Tibial artery (tissue), 4 donors: ENCODE measurements at regions of chr3 and their contacts with region 1.

Region 1: GRCh38 chr3:112519424-112520001 is 20.2 kb upstream of the BTLA start:
- DNase-seq: no peak
- H3K4me3 ChIP-seq: no peak overlapping the region
- H3K27ac ChIP-seq: no peak overlapping the region
- H3K4me1 ChIP-seq: no peaks in the 10 kb centered on the region
- H3K27me3 ChIP-seq: no peaks in the 10 kb centered on the region
- CTCF ChIP-seq: peak; percentile 75 to 86

Region 2: GRCh38 chr3:112293368-112294321 is 225.9 kb before region 1 on chr3 and contains the start of gene SLC9C1:
- intact Hi-C with region 1: loop called (anchors 10 kb)
- DNase-seq: peak in 1 of 2 donors; percentile 27
- H3K4me3 ChIP-seq: peak within 1 kb of the TSS; percentile 45 to 53
- H3K27ac ChIP-seq: peak within 1 kb of the TSS; percentile 65 to 75
- H3K4me1 ChIP-seq: no peaks in the 10 kb centered on the region
- H3K27me3 ChIP-seq: no peaks in the 10 kb centered on the region
- CTCF ChIP-seq: peak; percentile 48 to 60

Region 3: DNA sequence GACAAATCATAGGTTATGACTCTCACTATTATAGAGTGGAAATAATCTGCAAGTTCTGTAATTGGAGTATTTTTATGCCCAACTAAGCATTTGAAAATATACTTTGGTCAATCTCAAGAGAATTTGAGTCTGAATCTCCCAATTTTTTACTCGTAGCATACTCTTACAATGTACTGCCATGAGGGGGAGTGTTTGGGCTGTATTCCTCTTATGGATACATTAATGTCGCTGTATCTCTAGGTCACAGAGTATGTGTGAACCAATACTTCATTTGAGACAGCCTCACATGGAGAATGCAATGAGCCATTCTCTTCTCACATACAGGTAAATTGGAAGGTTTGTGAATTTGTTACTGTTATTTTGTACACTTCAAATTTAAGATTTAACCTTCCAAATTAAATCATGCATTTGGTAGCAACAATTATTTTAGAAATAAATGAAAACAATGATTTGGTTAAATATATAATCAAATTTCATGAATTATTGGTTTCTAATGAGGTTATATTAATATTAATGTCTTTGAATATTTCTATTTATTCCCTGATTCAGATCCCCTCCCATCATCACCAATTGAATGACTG is 192.1 kb before region 1 on chr3:
- intact Hi-C with region 1: loop called (anchors 2 kb)
- DNase-seq: no peak
- H3K4me3 ChIP-seq: no peak overlapping the region
- H3K27ac ChIP-seq: no peak overlapping the region
- H3K4me1 ChIP-seq: peaks cover 0 to 9% (median 0%) of the 10 kb centered on the region in 4 donors
- H3K27me3 ChIP-seq: no peaks in the 10 kb centered on the region
- CTCF ChIP-seq: peak; percentile 74 to 88

Region 4: GRCh38 chr3:112582244-112582874 is 62.8 kb after region 1 on chr3:
- intact Hi-C with region 1: no loop called
- DNase-seq: no peak
- H3K4me3 ChIP-seq: no peak overlapping the region
- H3K27ac ChIP-seq: no peak overlapping the region
- H3K4me1 ChIP-seq: peaks cover 0 to 16% (median 0%) of the 10 kb centered on the region in 4 donors
- H3K27me3 ChIP-seq: no peaks in the 10 kb centered on the region
- CTCF ChIP-seq: peak; percentile 52 to 58